Heart right ventricle (tissue), 16 donors: ENCODE measurements at regions of chr6 and their contacts with region 1.

Region 1: GRCh38 chr6:15621203-15622044 is 41.4 kb downstream of the DTNBP1 start:
- DNase-seq: peak; percentile 34 to 45
- ATAC-seq: peak; percentile 83 to 94 (median 90)
- H3K4me3 ChIP-seq: no peak overlapping the region
- H3K27ac ChIP-seq: peak overlapping the region; percentile 46 to 80 (median 75)
- H3K4me1 ChIP-seq: peaks cover 0 to 41% (median 33%) of the 10 kb centered on the region in 9 donors
- H3K27me3 ChIP-seq: no peaks in the 10 kb centered on the region
- CTCF ChIP-seq: no peak

Region 2: GRCh38 chr6:14129575-14129974 is 1491.8 kb before region 1 on chr6:
- intact Hi-C with region 1: loop called in 7 of 10 experiments (anchors 2 to 10 kb)
- DNase-seq: peak; percentile 20 to 62
- ATAC-seq: peak; percentile 80 to 93 (median 89)
- H3K4me3 ChIP-seq: no peak overlapping the region
- H3K27ac ChIP-seq: no peak overlapping the region
- H3K4me1 ChIP-seq: peaks cover 0 to 23% (median 10%) of the 10 kb centered on the region in 9 donors
- H3K27me3 ChIP-seq: no peaks in the 10 kb centered on the region
- CTCF ChIP-seq: peak; percentile 24 to 85 (median 64)

Region 3: DNA sequence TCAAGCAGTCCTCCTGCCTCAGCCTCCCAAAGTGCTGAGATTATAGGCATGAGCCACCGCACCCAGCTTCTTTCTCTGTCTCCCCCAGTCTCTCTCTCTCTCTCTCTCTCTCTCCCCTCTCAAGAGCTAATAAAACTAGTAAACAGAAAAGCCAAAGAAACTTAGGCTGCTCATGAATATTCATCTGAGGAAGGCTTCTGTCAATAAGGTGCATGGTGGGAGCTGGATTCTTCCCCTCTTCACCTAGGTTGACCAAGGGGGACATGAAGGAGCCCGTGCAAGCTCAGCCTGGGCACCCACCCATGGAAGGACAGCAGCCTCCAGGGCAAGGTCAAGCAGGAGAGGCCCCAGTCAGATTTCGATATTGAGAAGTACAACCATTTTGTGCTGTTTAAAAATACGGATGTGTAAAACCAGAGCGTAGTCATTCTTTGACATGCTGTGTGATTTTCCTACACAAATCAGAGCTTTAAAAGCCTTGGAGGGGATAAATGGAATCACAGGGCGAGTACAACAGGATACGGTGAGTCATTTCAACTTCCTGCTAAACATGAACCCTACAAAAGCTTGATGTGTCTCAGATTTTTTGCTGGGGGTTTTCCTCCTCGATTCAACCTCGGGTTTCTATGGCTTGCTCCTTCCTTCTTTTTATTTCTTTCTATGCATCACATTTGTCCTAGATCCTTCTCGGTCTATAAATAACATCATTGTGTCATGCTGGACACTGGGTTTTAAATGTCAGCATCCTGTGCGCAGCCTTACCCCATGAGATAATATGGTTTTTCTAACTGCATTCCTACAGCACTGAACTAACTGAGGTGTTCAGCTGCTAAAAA is 744.4 kb before region 1 on chr6:
- intact Hi-C with region 1: loop called in 1 of 10 experiments (anchors 10 kb)
- DNase-seq: peak in 1 of 2 donors; percentile 29
- ATAC-seq: peak; percentile 75 to 92 (median 88)
- H3K4me3 ChIP-seq: no peak overlapping the region
- H3K27ac ChIP-seq: peak overlapping the region; percentile 48 to 89 (median 76)
- H3K4me1 ChIP-seq: peaks cover 11 to 64% (median 45%) of the 10 kb centered on the region in 9 donors
- H3K27me3 ChIP-seq: no peaks in the 10 kb centered on the region
- CTCF ChIP-seq: no peak

Region 4: DNA sequence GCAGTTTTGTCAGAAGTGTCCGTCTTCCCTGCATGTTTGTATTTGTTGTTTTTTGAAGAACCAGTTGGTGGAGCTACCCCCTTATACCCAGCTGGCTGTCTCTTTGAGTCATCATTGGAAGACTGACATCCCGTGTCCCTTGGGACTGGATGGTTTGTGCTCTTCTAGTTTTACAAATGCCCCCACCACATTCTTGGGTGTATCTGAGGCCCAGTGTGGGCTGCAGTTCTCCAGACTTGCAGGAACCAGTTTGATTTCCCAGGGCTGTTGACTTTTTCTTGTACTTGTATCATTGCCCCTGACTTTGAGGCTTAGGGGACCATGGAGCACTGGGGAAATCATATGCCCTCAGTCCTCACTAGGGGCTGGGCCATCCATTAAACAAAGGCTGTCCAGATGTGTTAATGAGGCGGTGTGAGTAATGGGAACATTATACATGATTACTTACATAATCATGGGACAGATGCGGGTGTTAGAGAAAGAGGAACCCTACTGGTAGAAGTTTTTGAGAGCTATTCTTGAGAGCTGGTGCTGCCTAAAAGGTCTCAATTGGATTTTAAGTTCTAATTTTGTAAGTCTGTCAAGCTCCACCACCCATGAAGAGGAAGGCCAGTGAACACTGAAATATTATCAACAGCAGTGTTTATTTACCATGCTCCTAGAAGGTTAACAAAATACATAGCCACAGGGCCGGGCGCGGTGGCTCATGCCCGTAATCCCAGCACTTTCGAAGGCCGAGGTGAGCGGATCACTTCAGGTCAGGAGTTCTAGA is 367.2 kb before region 1 on chr6:
- intact Hi-C with region 1: loop called in 3 of 10 experiments (anchors 5 to 10 kb)
- DNase-seq: no peak
- ATAC-seq: no peak
- H3K4me3 ChIP-seq: no peak overlapping the region
- H3K27ac ChIP-seq: peak overlapping the region in 1 of 10 donors; percentile 22
- H3K4me1 ChIP-seq: peaks cover 6 to 98% (median 72%) of the 10 kb centered on the region in 9 donors
- H3K27me3 ChIP-seq: no peaks in the 10 kb centered on the region
- CTCF ChIP-seq: peak in 3 of 9 donors; percentile 21 to 26 (median 24)

Region 5: DNA sequence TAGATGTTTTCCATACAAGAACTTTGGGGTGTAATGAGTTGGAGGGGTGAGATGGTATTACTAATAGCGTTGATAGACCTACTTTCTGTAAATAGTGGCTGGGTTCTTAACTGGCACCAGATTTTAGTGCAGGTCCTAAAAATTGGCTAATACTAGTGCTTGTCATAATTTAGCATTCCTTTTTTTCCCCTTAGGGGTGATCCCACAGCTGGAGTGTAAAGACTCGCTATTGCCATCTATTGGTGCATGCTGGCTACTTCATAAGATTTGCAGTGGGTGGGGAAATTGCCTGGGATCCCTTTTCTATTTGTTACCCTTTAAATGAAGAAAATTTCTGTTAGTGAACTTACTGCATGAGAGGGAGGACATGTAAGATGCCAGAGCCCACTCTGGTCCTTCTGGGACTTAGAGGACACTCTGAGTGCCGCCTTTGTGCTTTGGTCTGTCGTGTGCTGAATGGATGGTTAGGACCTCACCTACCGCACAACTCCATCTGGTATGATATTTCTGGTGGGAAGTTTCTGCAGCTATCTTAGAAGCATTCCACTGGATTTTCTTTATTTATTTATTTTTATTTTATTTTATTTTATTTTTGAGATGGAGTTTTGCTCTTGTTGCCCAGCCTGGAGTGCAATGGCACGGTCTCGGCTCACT is 180.1 kb before region 1 on chr6:
- intact Hi-C with region 1: loop called in 1 of 10 experiments (anchors 5 kb)
- DNase-seq: peak in 1 of 2 donors; percentile 56
- ATAC-seq: peak; percentile 51 to 75 (median 70)
- H3K4me3 ChIP-seq: no peak overlapping the region
- H3K27ac ChIP-seq: no peak overlapping the region
- H3K4me1 ChIP-seq: peaks cover 4 to 90% (median 70%) of the 10 kb centered on the region in 9 donors
- H3K27me3 ChIP-seq: no peaks in the 10 kb centered on the region
- CTCF ChIP-seq: peak; percentile 69 to 88 (median 80)

Region 6: DNA sequence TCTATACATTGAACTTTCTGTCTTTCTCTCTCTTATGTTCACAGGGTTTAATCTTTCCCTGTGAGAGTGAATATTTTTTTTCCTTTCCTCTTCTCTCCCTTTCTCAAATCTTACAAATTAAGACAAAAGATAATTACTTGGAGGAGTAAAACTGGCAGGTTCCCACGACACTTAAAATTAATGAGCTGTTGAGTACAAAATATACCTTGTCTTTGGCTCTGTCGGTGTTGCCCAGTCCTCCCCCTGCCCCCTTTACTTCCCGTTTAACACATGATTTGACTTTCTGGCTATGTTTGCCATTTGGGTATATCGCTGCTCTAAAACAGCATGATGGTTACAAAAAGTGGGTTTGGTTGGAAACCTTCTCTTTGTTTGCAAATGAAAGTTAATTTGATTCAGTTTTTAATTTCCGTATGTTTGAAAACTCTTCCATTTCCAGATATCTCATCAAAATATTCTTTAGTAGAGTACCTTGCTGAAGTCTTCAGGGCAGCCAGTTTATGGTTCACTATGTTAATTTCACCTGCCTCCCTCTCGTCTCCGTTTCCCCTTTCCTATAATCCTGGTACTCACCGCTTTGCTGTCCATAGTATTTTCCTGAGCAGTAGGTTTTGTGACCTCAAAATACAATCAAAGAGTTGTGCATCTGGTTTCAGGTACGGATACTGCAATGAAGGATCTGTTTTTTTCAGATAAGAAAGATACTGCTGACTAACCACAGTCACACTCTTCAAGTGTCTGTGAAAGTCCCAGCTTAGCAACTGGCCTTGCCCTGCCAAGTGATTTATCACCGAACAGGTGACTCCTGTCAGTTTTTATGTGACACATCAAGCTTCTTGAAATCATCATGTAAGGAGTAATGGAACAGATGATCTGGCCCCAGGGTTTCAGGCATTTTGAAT is 139.8 kb before region 1 on chr6:
- intact Hi-C with region 1: no loop called
- DNase-seq: no peak
- ATAC-seq: peak in 1 of 8 donors; percentile 30
- H3K4me3 ChIP-seq: no peak overlapping the region
- H3K27ac ChIP-seq: no peak overlapping the region
- H3K4me1 ChIP-seq: peaks cover 5 to 70% (median 38%) of the 10 kb centered on the region in 9 donors
- H3K27me3 ChIP-seq: no peaks in the 10 kb centered on the region
- CTCF ChIP-seq: no peak

Region 7: DNA sequence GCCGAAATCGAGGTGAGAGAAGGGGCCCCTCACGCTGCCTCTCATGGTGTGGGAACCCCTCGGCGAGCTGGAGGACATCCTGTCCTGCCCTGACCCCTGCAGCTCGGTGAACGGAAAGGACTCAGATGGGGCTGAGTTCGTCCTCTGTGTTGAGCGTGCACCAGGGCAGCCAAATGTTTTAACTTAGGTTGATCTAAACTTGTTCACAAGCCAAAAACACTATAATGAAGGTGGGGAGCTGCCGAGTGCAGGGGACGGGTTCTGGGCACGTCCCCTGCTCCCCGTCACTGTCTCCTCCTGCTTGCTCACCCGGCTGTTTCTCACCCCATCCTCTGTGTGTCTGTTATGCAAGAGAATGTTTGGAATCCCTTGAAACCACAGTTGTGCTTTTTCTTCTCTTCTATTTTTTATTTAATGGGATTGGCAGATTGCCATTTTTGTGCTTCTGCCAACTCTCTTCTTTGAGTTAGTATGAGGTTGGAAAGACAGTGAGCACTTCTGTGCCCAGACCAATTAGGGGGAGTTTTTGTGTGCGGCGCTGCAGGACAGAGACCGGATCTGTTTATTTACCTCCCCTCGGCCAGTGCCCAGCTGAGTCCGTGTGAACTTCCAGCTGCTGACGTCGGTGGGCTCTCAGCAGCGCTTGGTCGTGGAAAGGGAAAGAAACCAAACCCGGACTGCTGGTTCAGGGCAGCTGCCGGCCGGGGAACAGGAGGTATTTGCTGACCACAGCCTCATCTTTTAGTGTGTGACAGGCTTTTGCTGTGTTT is 116.7 kb before region 1 on chr6:
- intact Hi-C with region 1: loop called in 5 of 10 experiments (anchors 2 to 10 kb)
- DNase-seq: peak; percentile 73 to 75
- ATAC-seq: peak; percentile 59 to 86 (median 80)
- H3K4me3 ChIP-seq: peak overlapping the region in 8 of 10 donors; percentile 6 to 42 (median 28)
- H3K27ac ChIP-seq: peak overlapping the region; percentile 46 to 88 (median 78)
- H3K4me1 ChIP-seq: peaks cover 15 to 64% (median 51%) of the 10 kb centered on the region in 9 donors
- H3K27me3 ChIP-seq: no peaks in the 10 kb centered on the region
- CTCF ChIP-seq: peak in 1 of 9 donors; percentile 4

Region 8: GRCh38 chr6:15518057-15518456 is 103.4 kb before region 1 on chr6:
- intact Hi-C with region 1: loop called in 6 of 10 experiments (anchors 1 to 5 kb)
- DNase-seq: no peak
- ATAC-seq: no peak
- H3K4me3 ChIP-seq: no peak overlapping the region
- H3K27ac ChIP-seq: no peak overlapping the region
- H3K4me1 ChIP-seq: peaks cover 0 to 18% (median 5%) of the 10 kb centered on the region in 9 donors
- H3K27me3 ChIP-seq: no peaks in the 10 kb centered on the region
- CTCF ChIP-seq: no peak

Region 9: GRCh38 chr6:15922510-15923250 is 301.3 kb after region 1 on chr6:
- intact Hi-C with region 1: no loop called
- DNase-seq: no peak
- ATAC-seq: peak in 1 of 8 donors; percentile 35
- H3K4me3 ChIP-seq: no peak overlapping the region
- H3K27ac ChIP-seq: no peak overlapping the region
- H3K4me1 ChIP-seq: no peaks in the 10 kb centered on the region
- H3K27me3 ChIP-seq: no peaks in the 10 kb centered on the region
- CTCF ChIP-seq: no peak